ENCODE measurements at regions of chr1 and their contacts with region 1.

Region 1: GRCh38 chr1:161165742-161166668 is at the start of gene PPOX:
- DNase-seq: peak; percentile 97
- ATAC-seq: peak; percentile 94
- H3K4me3 Mint-ChIP-seq: peak within 1 kb of the TSS; percentile 82
- H3K27ac Mint-ChIP-seq: peak within 1 kb of the TSS; percentile 95
- H3K4me1 Mint-ChIP-seq: peaks cover 46% of the 10 kb centered on the region
- H3K27me3 Mint-ChIP-seq: no peaks in the 10 kb centered on the region
- CTCF ChIP-seq: peak; percentile 69
- total RNA-seq, gene PPOX: 24.4 to 24.9 TPM

Region 2: DNA sequence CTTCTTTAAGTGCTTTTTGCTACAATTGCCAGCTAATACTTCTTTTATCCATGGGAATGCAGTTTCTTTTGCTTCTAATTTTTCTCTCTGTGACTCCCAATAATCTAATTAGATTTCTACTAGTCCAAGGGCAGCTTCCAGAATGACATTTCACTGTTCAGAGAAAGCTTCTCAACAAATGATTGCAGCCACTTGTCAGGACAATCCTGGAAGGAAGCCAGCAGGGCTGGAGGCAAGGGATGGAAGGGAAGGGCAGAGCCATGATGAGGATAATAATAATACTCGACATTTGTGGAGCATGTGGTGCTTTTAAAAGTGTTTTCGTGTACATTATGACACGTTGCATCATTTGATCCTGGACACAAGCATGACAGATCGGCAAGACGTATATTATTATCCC is 164.5 kb before region 1 on chr1:
- CTCF ChIA-PET with region 1: no interaction called
- POLR2A ChIA-PET with region 1: no interaction called
- intact Hi-C with region 1: no loop called
- DNase-seq: no peak
- ATAC-seq: no peak
- H3K4me3 Mint-ChIP-seq: no peak overlapping the region
- H3K27ac Mint-ChIP-seq: no peak overlapping the region
- H3K4me1 Mint-ChIP-seq: peaks cover 7% of the 10 kb centered on the region
- H3K27me3 Mint-ChIP-seq: no peaks in the 10 kb centered on the region
- CTCF ChIP-seq: no peak

Region 3: GRCh38 chr1:161139765-161140164 is 26.2 kb before region 1 on chr1:
- CTCF ChIA-PET with region 1: interaction called, 16 read pairs
- POLR2A ChIA-PET with region 1: interaction called, 3 read pairs
- intact Hi-C with region 1: no loop called
- DNase-seq: peak; percentile 65
- ATAC-seq: no peak
- H3K4me3 Mint-ChIP-seq: no peak overlapping the region
- H3K27ac Mint-ChIP-seq: no peak overlapping the region
- H3K4me1 Mint-ChIP-seq: peaks cover 6% of the 10 kb centered on the region
- H3K27me3 Mint-ChIP-seq: no peaks in the 10 kb centered on the region
- CTCF ChIP-seq: peak; percentile 74

Region 4: DNA sequence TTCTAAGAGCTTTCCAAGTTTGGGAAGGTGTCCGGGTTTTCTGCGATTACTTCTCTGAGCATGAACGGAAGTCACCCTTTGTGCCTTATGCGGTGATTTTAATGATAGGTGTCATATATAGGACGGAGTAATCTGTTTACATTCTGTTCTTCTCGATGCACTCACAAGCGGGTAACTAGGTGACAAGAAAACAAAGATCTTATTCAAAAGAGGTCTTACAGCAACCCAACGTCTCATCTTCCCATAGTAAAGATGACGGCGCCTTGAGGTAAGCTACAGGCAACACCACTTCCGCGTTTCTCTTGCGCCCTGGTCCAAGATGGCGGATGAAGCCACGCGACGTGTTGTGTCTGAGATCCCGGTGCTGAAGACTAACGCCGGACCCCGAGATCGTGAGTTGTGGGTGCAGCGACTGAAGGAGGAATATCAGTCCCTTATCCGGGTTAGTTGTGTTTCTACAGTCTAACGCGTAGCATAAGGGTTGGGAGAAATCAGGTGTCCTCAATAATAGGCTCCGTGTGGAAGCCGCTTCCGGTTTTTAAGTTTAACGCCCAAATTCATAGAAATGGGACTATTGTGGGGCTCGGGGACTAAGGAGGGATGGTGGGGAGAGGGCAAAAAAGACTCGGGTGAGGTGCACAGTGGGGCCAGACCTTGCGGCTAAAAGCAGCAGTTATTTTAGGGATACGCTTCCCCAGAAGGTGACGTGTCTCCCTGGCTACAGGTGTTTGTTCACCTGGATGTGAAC is 12.2 kb before region 1 on chr1 and contains the start of gene UFC1:
- CTCF ChIA-PET with region 1: interaction called, 50 read pairs
- POLR2A ChIA-PET with region 1: interaction called, 34 read pairs
- intact Hi-C with region 1: no loop called
- DNase-seq: peak; percentile 90
- ATAC-seq: peak; percentile 95
- H3K4me3 Mint-ChIP-seq: peak within 1 kb of the TSS; percentile 95
- H3K27ac Mint-ChIP-seq: peak within 1 kb of the TSS; percentile 99
- H3K4me1 Mint-ChIP-seq: peaks cover 19% of the 10 kb centered on the region
- H3K27me3 Mint-ChIP-seq: no peaks in the 10 kb centered on the region
- CTCF ChIP-seq: no peak
- total RNA-seq, gene UFC1: 81.2 to 84.1 TPM

Region 5: DNA sequence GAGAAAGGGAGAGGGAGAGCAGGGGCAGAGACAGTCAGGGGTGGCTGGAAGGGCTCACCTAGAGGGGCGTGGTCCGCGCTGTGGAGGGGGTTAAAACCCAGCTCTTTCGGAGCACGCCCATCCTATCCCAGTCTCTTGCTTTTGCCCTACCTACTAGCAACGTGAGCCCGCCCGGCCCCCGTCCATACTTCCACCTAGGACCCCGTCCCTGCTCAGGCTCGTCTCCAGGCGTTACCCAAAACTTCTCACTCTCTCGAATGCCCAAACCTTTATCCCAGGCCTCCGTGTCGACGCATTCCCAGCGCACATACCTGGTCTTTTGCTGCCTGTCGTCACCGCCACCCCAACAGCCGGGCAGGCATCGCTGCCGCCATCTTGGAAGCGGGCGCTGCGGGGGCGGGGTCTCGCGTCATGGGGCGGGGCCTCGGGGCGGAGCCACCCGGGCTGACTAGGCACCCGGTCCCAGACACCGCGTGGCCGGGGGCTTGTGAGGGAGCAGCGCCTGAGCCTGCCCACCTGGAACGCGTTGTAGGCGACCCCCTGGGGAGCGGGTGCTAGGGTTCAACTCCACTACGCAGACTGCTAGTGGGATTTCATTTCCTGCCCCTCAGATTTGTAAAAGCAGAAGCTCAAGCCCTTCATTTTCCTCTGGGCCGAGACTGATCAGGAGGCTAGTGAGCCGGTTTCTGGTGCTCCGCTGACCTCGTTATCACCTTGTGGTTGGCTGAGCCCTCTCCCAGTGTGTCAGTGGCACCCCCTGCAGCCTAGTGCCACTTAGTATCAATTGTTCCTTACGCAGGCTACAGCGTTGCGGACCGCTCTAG is 11.3 kb after region 1 on chr1 and contains the start of gene B4GALT3:
- CTCF ChIA-PET with region 1: interaction called, 45 read pairs
- POLR2A ChIA-PET with region 1: interaction called, 46 read pairs
- intact Hi-C with region 1: no loop called
- DNase-seq: peak; percentile 96
- ATAC-seq: peak; percentile 85
- H3K4me3 Mint-ChIP-seq: peak within 1 kb of the TSS; percentile 97
- H3K27ac Mint-ChIP-seq: peak within 1 kb of the TSS; percentile 99
- H3K4me1 Mint-ChIP-seq: peaks cover 55% of the 10 kb centered on the region
- H3K27me3 Mint-ChIP-seq: no peaks in the 10 kb centered on the region
- CTCF ChIP-seq: no peak
- total RNA-seq, gene B4GALT3: 39.9 to 40.8 TPM

Region 6: GRCh38 chr1:161185282-161185682 is 19.3 kb after region 1 on chr1:
- CTCF ChIA-PET with region 1: interaction called, 45 read pairs
- POLR2A ChIA-PET with region 1: interaction called, 5 read pairs
- intact Hi-C with region 1: no loop called
- DNase-seq: peak; percentile 89
- ATAC-seq: peak; percentile 74
- H3K4me3 Mint-ChIP-seq: peak overlapping the region; percentile 48
- H3K27ac Mint-ChIP-seq: peak overlapping the region; percentile 95
- H3K4me1 Mint-ChIP-seq: peaks cover 74% of the 10 kb centered on the region
- H3K27me3 Mint-ChIP-seq: no peaks in the 10 kb centered on the region
- CTCF ChIP-seq: no peak

Region 7: GRCh38 chr1:161192476-161193465 is 26.8 kb after region 1 on chr1:
- CTCF ChIA-PET with region 1: interaction called, 36 read pairs
- POLR2A ChIA-PET with region 1: interaction called, 7 read pairs
- intact Hi-C with region 1: no loop called
- DNase-seq: peak; percentile 81
- ATAC-seq: peak; percentile 95
- H3K4me3 Mint-ChIP-seq: no peak overlapping the region
- H3K27ac Mint-ChIP-seq: peak overlapping the region; percentile 78
- H3K4me1 Mint-ChIP-seq: peaks cover 23% of the 10 kb centered on the region
- H3K27me3 Mint-ChIP-seq: no peaks in the 10 kb centered on the region
- CTCF ChIP-seq: peak; percentile 92

Region 8: GRCh38 chr1:161201828-161202725 is 36.1 kb after region 1 on chr1 and contains the start of gene NDUFS2:
- CTCF ChIA-PET with region 1: interaction called, 12 read pairs
- POLR2A ChIA-PET with region 1: interaction called, 8 read pairs
- intact Hi-C with region 1: no loop called
- DNase-seq: peak; percentile 99
- ATAC-seq: peak; percentile 97
- H3K4me3 Mint-ChIP-seq: peak within 1 kb of the TSS; percentile 89
- H3K27ac Mint-ChIP-seq: peak within 1 kb of the TSS; percentile 96
- H3K4me1 Mint-ChIP-seq: peaks cover 57% of the 10 kb centered on the region
- H3K27me3 Mint-ChIP-seq: no peaks in the 10 kb centered on the region
- CTCF ChIP-seq: no peak
- total RNA-seq, gene NDUFS2: 85.9 to 97.1 TPM